Activated T-helper 1 cell treated with anti-CD3 and anti-CD28 coated beads, Interleukin-12 subunit alpha, Interleukin-12 subunit beta, Interleukin-2, Interleukin-4 antibody, amounts not matched to agents 30 ng/mL and 10 ng/mL and 1 ng/mL, durations not matched to agents 14 hours and 24 hours and 36 hours (primary cell): ENCODE measurements at regions of chr10 and their contacts with region 1.

Region 1: DNA sequence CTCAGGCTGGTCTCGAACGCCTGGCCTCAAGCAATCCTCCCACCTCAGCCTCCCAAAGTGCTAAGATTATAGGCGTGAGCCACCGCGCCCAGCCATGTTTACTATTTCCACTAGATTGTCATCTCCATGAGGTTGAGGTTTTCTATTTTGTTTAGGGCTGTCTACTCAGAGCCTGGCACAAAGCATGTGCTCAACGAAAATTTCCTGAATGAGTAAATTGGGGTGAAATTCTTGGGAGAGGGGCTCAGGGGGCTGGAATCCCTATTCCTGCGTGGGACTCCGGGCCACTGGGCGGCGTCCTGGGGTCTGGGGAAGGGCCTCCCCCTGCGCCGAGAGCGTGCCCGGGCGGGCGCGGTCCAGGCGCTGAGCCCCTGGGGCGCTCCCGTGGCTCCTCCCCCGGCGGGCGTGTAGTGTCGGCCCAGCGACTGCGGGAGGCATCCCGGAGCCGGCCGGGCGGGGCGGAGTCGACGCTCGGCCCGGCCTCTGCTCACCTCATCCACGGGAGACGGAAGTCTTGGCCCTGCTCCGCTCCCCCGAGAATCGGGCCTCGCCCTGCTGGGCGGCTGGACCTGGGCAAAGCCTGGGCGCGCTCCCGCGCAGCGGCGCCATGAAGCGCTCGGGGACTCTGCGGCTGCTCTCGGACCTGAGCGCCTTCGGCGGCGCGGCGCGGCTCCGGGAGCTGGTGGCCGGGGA is at the start of gene HPS6:
- DNase-seq: peak; percentile 89
- H3K4me3 Mint-ChIP-seq: peak within 1 kb of the TSS; percentile 89
- H3K27ac Mint-ChIP-seq: peak within 1 kb of the TSS; percentile 90
- H3K4me1 Mint-ChIP-seq: peaks cover 17% of the 10 kb centered on the region
- H3K27me3 Mint-ChIP-seq: no peaks in the 10 kb centered on the region
- total RNA-seq, gene HPS6: 24.5 and 26.8 TPM in 2 replicates

Region 2: GRCh38 chr10:102853944-102854694 is 789.1 kb after region 1 on chr10 and contains the start of gene BORCS7:
- intact Hi-C with region 1: loop called (anchors 10 kb)
- DNase-seq: peak; percentile 84
- H3K4me3 Mint-ChIP-seq: peak within 1 kb of the TSS; percentile 82
- H3K27ac Mint-ChIP-seq: peak within 1 kb of the TSS; percentile 92
- H3K4me1 Mint-ChIP-seq: peaks cover 19% of the 10 kb centered on the region
- H3K27me3 Mint-ChIP-seq: no peaks in the 10 kb centered on the region
- total RNA-seq, gene BORCS7: 9.7 and 12.6 TPM in 2 replicates